ENCODE measurements at regions of chr13 and their contacts with region 1.

Region 1: DNA sequence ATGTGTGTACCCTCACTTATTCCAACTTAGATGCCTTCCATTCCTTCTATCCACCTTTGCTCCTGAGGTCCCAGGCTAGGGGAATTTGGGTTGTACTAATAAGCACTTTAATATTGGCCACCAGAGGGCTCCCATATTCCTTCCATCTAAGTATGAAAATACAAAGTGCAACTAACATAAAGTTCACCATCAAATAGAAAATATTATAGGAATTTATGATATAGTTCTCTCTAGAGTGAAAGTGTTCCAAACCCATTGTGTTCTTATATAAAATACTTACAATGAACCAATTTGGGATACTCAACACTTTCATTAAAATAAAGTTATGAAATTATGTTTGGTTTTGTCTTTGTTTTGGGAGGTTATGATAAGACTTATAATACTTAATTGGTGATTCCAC is 62.3 kb downstream of the ITGBL1 start:
- DNase-seq: peak; percentile 29
- H3K4me3 Mint-ChIP-seq: no peak overlapping the region
- H3K27ac Mint-ChIP-seq: no peak overlapping the region
- H3K4me1 Mint-ChIP-seq: peaks cover 2% of the 10 kb centered on the region
- H3K27me3 Mint-ChIP-seq: peaks cover 4% of the 10 kb centered on the region

Region 2: DNA sequence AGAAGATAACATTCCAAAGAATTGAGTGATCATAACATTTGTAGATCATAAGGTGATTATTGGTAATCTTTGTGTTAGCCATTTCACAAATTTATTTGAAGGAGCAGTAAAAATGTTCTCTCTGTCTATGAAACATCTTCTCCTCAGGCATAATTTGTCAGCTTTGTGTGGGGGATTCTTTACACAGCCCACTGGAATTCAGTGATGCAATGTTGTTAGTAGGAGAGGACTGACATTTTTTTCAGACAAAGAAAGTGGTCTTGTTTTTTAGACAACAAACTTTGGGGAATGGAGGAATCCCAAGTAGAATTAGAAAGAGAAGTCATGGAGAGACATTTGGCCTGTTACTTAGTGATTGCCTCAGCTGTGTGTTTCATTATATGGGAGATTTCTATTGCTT is 38.0 kb after region 1 on chr13:
- CTCF ChIA-PET with region 1: no interaction called
- intact Hi-C with region 1: no loop called
- DNase-seq: no peak
- H3K4me3 Mint-ChIP-seq: no peak overlapping the region
- H3K27ac Mint-ChIP-seq: no peak overlapping the region
- H3K4me1 Mint-ChIP-seq: no peaks in the 10 kb centered on the region
- H3K27me3 Mint-ChIP-seq: peaks cover 11% of the 10 kb centered on the region

Region 3: DNA sequence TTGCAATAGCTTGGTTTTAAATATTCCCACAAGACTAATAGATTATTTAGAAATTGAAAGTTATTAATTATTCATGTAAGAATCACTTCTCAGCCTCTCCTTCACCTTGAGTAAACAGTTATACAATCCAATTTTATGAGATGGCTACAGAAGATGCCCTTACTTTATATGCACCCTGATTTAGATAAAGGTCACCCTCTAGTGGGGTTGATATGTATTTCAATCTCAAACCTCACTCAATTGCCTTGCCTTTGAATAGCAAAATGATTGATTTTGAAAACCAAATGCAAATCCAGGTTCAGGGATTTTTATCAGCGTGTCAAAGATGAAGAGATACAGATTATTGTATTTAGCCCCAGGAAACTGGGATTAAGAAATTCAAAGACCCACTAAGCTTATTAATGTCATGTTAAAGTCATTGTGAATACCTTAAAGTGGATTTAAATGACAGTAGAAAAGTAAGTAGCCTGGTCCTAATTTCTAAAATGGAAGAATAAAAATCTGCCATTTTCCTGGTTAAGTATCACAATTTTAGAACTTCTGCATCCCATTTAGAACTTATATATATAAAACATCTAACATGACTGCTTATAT is 242.8 kb after region 1 on chr13:
- CTCF ChIA-PET with region 1: interaction called, 5 read pairs
- intact Hi-C with region 1: loop called (anchors 1 kb)
- DNase-seq: no peak
- H3K4me3 Mint-ChIP-seq: no peak overlapping the region
- H3K27ac Mint-ChIP-seq: no peak overlapping the region
- H3K4me1 Mint-ChIP-seq: no peaks in the 10 kb centered on the region
- H3K27me3 Mint-ChIP-seq: peaks cover 12% of the 10 kb centered on the region

Region 4: DNA sequence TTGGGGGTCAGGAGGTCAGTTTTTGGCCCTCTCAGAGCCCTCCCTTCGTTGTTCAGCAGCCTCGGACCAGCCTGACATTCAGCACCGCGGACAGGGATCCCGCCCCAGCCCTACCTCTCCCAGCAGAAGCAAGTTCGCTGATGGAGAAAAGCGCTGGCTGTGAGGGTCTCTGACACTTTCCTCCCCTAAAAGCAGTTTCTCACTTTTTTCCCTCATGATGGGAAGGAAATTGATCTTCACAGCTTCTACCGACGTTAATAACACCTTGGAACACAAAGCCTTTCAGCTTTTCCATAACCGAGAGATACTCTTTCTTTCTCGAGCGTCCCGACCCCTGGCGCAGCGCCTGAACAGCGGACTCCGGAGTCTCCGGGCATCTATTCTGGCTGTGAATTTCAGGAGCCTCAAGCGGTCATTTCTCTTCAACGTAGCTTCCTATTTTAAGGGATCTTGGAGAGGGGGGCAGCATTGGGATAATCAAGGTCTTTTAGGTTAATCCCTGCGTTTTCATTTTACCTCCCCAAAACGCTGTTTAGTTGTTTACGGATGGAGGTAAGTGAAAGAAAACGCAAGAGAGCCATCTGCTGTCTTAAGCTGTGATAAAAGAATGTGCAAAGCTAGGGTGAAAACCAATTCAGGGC is 404.9 kb after region 1 on chr13:
- CTCF ChIA-PET with region 1: no interaction called
- intact Hi-C with region 1: loop called (anchors 2 kb)
- DNase-seq: no peak
- H3K4me3 Mint-ChIP-seq: no peak overlapping the region
- H3K27ac Mint-ChIP-seq: no peak overlapping the region
- H3K4me1 Mint-ChIP-seq: no peaks in the 10 kb centered on the region
- H3K27me3 Mint-ChIP-seq: peaks cover 59% of the 10 kb centered on the region

Region 5: GRCh38 chr13:101930331-101930730 is 415.5 kb after region 1 on chr13:
- CTCF ChIA-PET with region 1: no interaction called
- intact Hi-C with region 1: no loop called
- DNase-seq: no peak
- H3K4me3 Mint-ChIP-seq: no peak overlapping the region
- H3K27ac Mint-ChIP-seq: no peak overlapping the region
- H3K4me1 Mint-ChIP-seq: no peaks in the 10 kb centered on the region
- H3K27me3 Mint-ChIP-seq: peaks cover 8% of the 10 kb centered on the region

Region 6: GRCh38 chr13:101942038-101942437 is 427.2 kb after region 1 on chr13:
- CTCF ChIA-PET with region 1: no interaction called
- intact Hi-C with region 1: loop called (anchors 10 kb)
- DNase-seq: peak; percentile 26
- H3K4me3 Mint-ChIP-seq: no peak overlapping the region
- H3K27ac Mint-ChIP-seq: no peak overlapping the region
- H3K4me1 Mint-ChIP-seq: no peaks in the 10 kb centered on the region
- H3K27me3 Mint-ChIP-seq: peaks cover 2% of the 10 kb centered on the region

Measured in activated naive CD4-positive, alpha-beta T cell treated with anti-CD3 and anti-CD28 coated beads for 36 hours (primary cell).